ENCODE measurements at regions of chr2 and their contacts with region 1.

Region 1: GRCh38 chr2:131492418-131493198 is 411 bp upstream of the MZT2A start:
- DNase-seq: peak; percentile 90
- H3K4me3 Mint-ChIP-seq: peak overlapping the region; percentile 99
- H3K27ac Mint-ChIP-seq: peak overlapping the region; percentile 98
- H3K4me1 Mint-ChIP-seq: peaks cover 21% of the 10 kb centered on the region
- H3K27me3 Mint-ChIP-seq: no peaks in the 10 kb centered on the region

Region 2: GRCh38 chr2:130181325-130181879 is 1311.2 kb before region 1 on chr2 and contains the start of gene SMPD4:
- intact Hi-C with region 1: loop called (anchors 5 kb)
- DNase-seq: peak; percentile 95
- H3K4me3 Mint-ChIP-seq: peak within 1 kb of the TSS; percentile 92
- H3K27ac Mint-ChIP-seq: peak within 1 kb of the TSS; percentile 95
- H3K4me1 Mint-ChIP-seq: peaks cover 9% of the 10 kb centered on the region
- H3K27me3 Mint-ChIP-seq: no peaks in the 10 kb centered on the region
- total RNA-seq, gene SMPD4: 84.3 and 84.8 TPM in 2 replicates

Region 3: DNA sequence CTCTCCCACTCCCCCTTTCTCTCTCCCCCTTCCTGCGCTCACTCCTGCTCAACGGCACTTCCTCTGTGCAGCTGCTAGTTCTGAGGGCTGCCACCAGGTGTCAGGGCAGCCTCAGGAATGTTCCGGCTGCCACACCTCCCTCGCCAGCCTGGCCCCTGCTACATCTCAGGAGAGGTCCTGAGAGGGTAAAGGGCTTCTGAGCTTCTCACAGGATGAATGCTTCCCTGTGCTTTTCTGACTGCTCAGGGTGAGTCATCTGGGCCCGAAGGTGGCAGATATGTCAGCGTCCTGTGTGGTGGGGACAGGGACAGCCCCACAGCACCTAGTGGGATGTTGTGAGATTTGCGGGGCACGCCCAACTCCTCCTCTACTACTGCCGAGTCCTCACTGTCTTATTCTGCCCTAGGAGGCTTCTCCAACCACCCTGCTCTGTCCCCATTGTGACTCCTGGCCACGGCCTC is 338.5 kb before region 1 on chr2:
- intact Hi-C with region 1: loop called (anchors 1 kb)
- DNase-seq: peak; percentile 50
- H3K4me3 Mint-ChIP-seq: no peak overlapping the region
- H3K27ac Mint-ChIP-seq: no peak overlapping the region
- H3K4me1 Mint-ChIP-seq: peaks cover 21% of the 10 kb centered on the region
- H3K27me3 Mint-ChIP-seq: peaks cover 5% of the 10 kb centered on the region

Region 4: GRCh38 chr2:131521961-131522794 is 29.6 kb after region 1 on chr2:
- intact Hi-C with region 1: loop called (anchors 1 kb)
- DNase-seq: no peak
- H3K4me3 Mint-ChIP-seq: no peak overlapping the region
- H3K27ac Mint-ChIP-seq: no peak overlapping the region
- H3K4me1 Mint-ChIP-seq: peaks cover 4% of the 10 kb centered on the region
- H3K27me3 Mint-ChIP-seq: no peaks in the 10 kb centered on the region